Endothelial cell of umbilical vein (primary cell): ENCODE measurements at regions of chr14 and their contacts with region 1.

Region 1: DNA sequence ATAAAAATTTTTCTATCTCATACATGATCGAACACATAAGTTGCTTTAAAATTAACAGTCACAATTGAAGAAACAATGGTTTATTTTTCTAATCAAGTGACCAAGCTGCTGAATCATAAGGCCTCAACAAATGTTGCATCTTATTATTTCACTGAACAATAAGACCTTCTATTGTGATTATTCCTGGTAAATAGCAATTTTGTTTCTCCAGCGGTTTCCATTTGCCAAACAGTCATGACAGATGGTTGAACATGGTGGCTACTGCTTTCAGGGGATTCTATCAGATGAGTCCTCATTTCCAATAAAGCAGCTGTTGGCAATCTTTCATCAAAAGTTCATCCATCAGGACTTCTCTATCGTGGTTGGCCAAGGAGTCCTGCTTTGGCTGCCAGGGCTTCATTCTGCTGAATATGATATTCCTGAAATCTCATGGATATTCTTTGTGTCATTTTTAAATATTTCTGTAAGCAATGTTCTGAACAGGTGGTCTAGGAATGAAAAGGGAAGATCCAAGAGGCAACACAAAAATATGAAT is 13.0 kb downstream of the TOMM20L start:
- DNase-seq: no peak
- H3K4me3 ChIP-seq: no peak overlapping the region
- H3K27ac ChIP-seq: no peak overlapping the region
- H3K4me1 ChIP-seq: no peaks in the 10 kb centered on the region
- H3K27me3 ChIP-seq: no peaks in the 10 kb centered on the region
- CTCF ChIP-seq: no peak
- POLR2A ChIP-seq: no peak

Region 2: GRCh38 chr14:58368956-58369355 is 39.8 kb before region 1 on chr14:
- CTCF ChIA-PET with region 1: no interaction called
- POLR2A ChIA-PET with region 1: no interaction called
- dilution Hi-C with region 1: no loop called
- intact Hi-C with region 1: no loop called
- DNase-seq: peak; percentile 59
- H3K4me3 ChIP-seq: no peak overlapping the region
- H3K27ac ChIP-seq: peak overlapping the region; percentile 63
- H3K4me1 ChIP-seq: peaks cover 11% of the 10 kb centered on the region
- H3K27me3 ChIP-seq: no peaks in the 10 kb centered on the region
- CTCF ChIP-seq: no peak
- POLR2A ChIP-seq: no peak

Region 3: GRCh38 chr14:58395812-58396788 is 12.6 kb before region 1 on chr14 and contains the start of gene TOMM20L:
- CTCF ChIA-PET with region 1: interaction called, 10 read pairs
- POLR2A ChIA-PET with region 1: no interaction called
- dilution Hi-C with region 1: no loop called
- intact Hi-C with region 1: no loop called
- DNase-seq: peak; percentile 68
- H3K4me3 ChIP-seq: peak within 1 kb of the TSS; percentile 1 to 52 (median 51)
- H3K27ac ChIP-seq: peak within 1 kb of the TSS; percentile 40
- H3K4me1 ChIP-seq: peaks cover 10% of the 10 kb centered on the region
- H3K27me3 ChIP-seq: no peaks in the 10 kb centered on the region
- CTCF ChIP-seq: peak; percentile 58 to 97
- POLR2A ChIP-seq: peak; percentile 54
- total RNA-seq, gene TOMM20L: not detected in 2 replicates

Region 4: DNA sequence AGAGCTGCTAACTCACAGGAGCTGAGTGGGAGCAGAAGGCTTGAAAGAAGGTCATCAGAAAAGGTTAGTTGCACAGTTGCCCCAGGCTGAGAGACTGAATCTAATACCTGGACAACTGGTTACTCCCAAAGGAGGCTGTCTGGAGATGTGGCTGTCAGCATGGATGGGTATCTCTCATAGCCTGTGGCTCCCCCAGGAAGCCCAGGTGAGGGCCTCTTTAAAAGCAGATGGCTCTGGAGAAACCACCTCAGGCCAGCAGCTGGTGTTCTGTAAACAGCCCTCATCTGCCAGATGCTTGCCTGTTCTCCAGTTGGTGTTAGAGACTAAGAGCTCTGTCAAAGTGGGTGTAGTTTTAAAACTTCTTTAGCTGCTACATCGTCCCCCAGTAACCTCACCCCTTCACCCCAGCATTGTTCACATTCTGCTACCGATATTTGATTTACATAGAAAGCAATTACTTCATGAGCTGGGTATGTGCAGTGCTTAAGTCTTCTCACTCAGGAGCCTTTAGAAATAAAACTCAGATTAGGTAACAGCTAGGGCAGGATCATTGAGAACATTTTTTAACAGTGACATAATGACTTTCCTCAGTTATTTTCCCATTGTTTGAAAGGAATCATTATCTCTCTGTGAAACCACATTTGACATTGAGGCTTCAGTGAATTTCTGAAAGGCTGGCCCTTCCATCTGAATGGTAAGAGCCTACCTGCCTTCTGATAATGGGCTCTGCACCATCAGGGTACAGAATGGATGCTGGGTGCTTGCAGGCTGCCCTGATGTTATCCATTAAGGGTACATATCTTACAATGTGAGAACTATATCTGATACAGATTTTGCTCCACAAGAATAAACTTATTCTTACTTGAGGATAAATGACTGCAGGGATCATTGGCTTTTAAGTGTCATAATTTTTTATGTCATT is 255.0 kb after region 1 on chr14:
- CTCF ChIA-PET with region 1: no interaction called
- POLR2A ChIA-PET with region 1: no interaction called
- dilution Hi-C with region 1: no loop called
- intact Hi-C with region 1: no loop called
- DNase-seq: no peak
- H3K4me3 ChIP-seq: no peak overlapping the region
- H3K27ac ChIP-seq: no peak overlapping the region
- H3K4me1 ChIP-seq: no peaks in the 10 kb centered on the region
- H3K27me3 ChIP-seq: peaks cover 0 to 5% of the 10 kb centered on the region in 2 experiments
- CTCF ChIP-seq: no peak
- POLR2A ChIP-seq: no peak